Right cardiac atrium (tissue), 5 donors: ENCODE measurements at regions of chr10 and their contacts with region 1.

Region 1: GRCh38 chr10:10677479-10677878 is 340.2 kb upstream of the CELF2 start:
- DNase-seq: peak; percentile 56 to 83 (median 74)
- ATAC-seq: peak; percentile 76 to 87
- H3K4me3 ChIP-seq: no peak overlapping the region
- H3K27ac ChIP-seq: no peak overlapping the region
- H3K4me1 ChIP-seq: no peaks in the 10 kb centered on the region
- H3K27me3 ChIP-seq: no peaks in the 10 kb centered on the region

Region 2: GRCh38 chr10:10233229-10233628 is 444.2 kb before region 1 on chr10:
- intact Hi-C with region 1: loop called in 1 of 4 experiments (anchors 10 kb)
- DNase-seq: no peak
- ATAC-seq: no peak
- H3K4me3 ChIP-seq: no peak overlapping the region
- H3K27ac ChIP-seq: no peak overlapping the region
- H3K4me1 ChIP-seq: no peaks in the 10 kb centered on the region
- H3K27me3 ChIP-seq: no peaks in the 10 kb centered on the region